HCT116 (cell line): ENCODE measurements at regions of chr16 and their contacts with region 1.

Region 1: DNA sequence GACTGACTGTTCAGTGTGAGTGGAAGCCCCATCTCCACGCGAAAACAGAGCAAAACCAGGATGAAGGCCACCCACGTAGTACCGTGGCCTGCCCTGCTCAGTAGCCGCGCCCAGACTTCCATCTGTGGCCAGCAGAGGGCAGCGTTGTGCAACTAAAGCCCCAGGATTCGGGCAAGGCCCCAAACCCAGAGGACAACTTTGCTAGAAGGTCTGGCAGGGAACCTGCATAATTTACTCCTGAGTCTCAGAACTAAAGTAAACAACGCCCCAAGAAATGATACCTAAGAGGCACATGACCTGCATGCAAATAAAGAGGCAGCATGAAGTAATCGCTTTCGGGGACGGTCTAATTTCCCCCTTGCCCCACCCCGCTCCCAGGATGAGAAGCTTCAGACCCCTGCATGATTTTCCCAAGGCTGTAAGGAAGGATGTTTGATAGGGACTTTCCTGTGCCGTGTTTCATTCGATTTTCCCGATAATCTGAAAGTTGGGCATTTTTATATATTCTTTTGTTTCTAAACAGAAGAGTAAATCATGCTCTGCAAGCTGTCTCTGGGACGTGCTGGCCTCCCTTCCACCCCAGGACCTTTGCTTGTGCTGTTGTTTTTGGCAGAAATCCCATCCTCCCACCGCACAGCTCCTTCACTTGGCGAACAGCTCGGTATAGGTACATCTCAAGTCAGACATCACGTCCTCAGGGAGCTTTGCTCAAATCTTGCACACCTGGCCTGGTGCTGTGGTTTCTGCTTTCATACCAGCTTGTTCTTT is 18.6 kb downstream of the HSBP1 start:
- DNase-seq: peak; percentile 64
- ATAC-seq: peak; percentile 94
- H3K4me3 ChIP-seq: peak overlapping the region in 1 of 2 experiments; percentile 8; a peak in 1 of 4 replicates
- H3K27ac ChIP-seq: no peak overlapping the region
- H3K4me1 ChIP-seq: peaks cover 6 to 18% of the 10 kb centered on the region in 2 experiments; a peak in 3 of 4 replicates
- H3K27me3 ChIP-seq: no peaks in the 10 kb centered on the region
- CTCF ChIP-seq: peak; percentile 94 to 99 (median 97)
- POLR2A ChIP-seq: no peak
- RAD21 ChIP-seq: peak; percentile 99

Region 2: DNA sequence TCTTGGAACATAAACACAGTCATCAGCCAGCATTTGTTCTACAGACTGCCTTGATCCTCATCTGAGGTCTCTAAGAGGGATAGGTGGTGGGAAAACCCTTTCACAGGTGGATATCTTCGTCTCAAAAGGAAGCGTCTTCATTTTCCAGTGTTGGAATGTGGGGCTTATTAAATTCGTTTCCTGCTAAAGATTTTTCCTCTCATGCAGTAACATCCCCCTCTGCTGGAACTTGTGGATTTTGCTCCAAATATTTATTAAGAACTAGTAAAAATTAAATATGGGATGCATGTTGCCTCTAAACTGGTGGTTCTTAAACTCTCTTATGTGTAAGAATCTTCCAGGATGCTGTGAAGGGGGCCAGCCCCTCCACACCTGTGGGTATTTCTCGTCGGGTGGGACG is 52.5 kb after region 1 on chr16:
- CTCF ChIA-PET with region 1: interaction called, 7 read pairs
- POLR2A ChIA-PET with region 1: no interaction called
- RAD21 ChIA-PET with region 1: interaction called in 1 of 2 experiments, 4 read pairs
- intact Hi-C with region 1: loop called (anchors 1 kb)
- DNase-seq: peak; percentile 52
- ATAC-seq: peak; percentile 72
- H3K4me3 ChIP-seq: no peak overlapping the region
- H3K27ac ChIP-seq: no peak overlapping the region
- H3K4me1 ChIP-seq: no peaks in the 10 kb centered on the region; a peak in 1 of 4 replicates
- H3K27me3 ChIP-seq: peaks cover 17% of the 10 kb centered on the region
- CTCF ChIP-seq: peak; percentile 63 to 93 (median 79)
- POLR2A ChIP-seq: no peak
- RAD21 ChIP-seq: peak; percentile 93

Region 3: GRCh38 chr16:83926726-83927397 is 100.5 kb after region 1 on chr16:
- CTCF ChIA-PET with region 1: interaction called, 3 read pairs
- POLR2A ChIA-PET with region 1: no interaction called
- RAD21 ChIA-PET with region 1: no interaction called
- intact Hi-C with region 1: loop called (anchors 1 kb)
- DNase-seq: peak; percentile 86
- ATAC-seq: peak; percentile 95
- H3K4me3 ChIP-seq: peak overlapping the region; percentile 52 to 58
- H3K27ac ChIP-seq: peak overlapping the region; percentile 63
- H3K4me1 ChIP-seq: peaks cover 7 to 26% of the 10 kb centered on the region in 2 experiments
- H3K27me3 ChIP-seq: no peaks in the 10 kb centered on the region
- CTCF ChIP-seq: peak; percentile 95 to 100 (median 99)
- POLR2A ChIP-seq: peak; percentile 30
- RAD21 ChIP-seq: peak; percentile 97